ENCODE measurements at regions of chr9 and their contacts with region 1.

Region 1: GRCh38 chr9:34403554-34404380 is 27.1 kb upstream of the MYORG start:
- DNase-seq: peak; percentile 75
- H3K4me3 ChIP-seq: no peak overlapping the region
- H3K27ac ChIP-seq: no peak overlapping the region
- H3K4me1 ChIP-seq: no peaks in the 10 kb centered on the region
- H3K27me3 ChIP-seq: no peaks in the 10 kb centered on the region
- CTCF ChIP-seq: peak; percentile 95

Region 2: DNA sequence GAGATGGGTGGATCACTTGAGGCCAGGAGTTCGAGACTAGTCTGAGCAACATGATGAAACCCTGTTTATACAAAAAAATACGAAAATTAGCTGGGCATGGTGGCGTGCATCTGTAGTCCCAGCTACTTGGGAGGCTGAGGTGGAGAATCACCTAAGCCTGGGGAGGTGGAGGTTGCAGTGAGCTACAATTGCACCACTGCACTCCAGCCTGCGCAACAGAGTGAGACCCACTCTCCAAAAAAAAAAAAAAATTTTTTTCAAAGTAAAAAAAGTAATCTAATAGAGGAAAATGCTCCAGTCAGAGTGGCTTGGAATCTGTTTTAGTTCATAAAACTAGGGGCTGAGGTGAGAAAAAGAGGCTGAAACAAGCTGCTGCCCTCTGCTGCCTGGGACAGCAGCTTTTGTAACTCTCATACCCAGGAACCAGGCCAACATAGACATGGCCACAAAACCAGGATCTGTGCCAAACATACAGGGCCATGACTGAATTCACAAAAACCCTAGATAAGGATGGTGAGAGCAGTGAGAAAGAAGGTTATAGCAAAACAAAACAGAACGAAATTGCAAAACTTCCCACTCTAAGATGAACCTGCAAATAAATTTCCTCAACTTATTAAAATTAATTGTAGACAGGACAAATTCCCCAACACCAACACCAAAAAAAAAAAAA is 264.2 kb before region 1 on chr9:
- CTCF ChIA-PET with region 1: interaction called, 17 read pairs
- POLR2A ChIA-PET with region 1: no interaction called
- intact Hi-C with region 1: no loop called
- DNase-seq: peak; percentile 45
- H3K4me3 ChIP-seq: no peak overlapping the region
- H3K27ac ChIP-seq: no peak overlapping the region
- H3K4me1 ChIP-seq: no peaks in the 10 kb centered on the region
- H3K27me3 ChIP-seq: no peaks in the 10 kb centered on the region
- CTCF ChIP-seq: peak; percentile 34; the same call in 1 of the 2 replicates

Region 3: GRCh38 chr9:34387239-34387638 is 16.5 kb before region 1 on chr9:
- CTCF ChIA-PET with region 1: no interaction called
- POLR2A ChIA-PET with region 1: no interaction called
- intact Hi-C with region 1: no loop called
- DNase-seq: no peak
- H3K4me3 ChIP-seq: no peak overlapping the region
- H3K27ac ChIP-seq: no peak overlapping the region
- H3K4me1 ChIP-seq: no peaks in the 10 kb centered on the region
- H3K27me3 ChIP-seq: no peaks in the 10 kb centered on the region
- CTCF ChIP-seq: no peak

Region 4: GRCh38 chr9:34603610-34604231 is 200.0 kb after region 1 on chr9:
- CTCF ChIA-PET with region 1: interaction called, 17 read pairs
- POLR2A ChIA-PET with region 1: no interaction called
- intact Hi-C with region 1: no loop called
- DNase-seq: peak; percentile 88
- H3K4me3 ChIP-seq: no peak overlapping the region
- H3K27ac ChIP-seq: no peak overlapping the region
- H3K4me1 ChIP-seq: no peaks in the 10 kb centered on the region
- H3K27me3 ChIP-seq: no peaks in the 10 kb centered on the region
- CTCF ChIP-seq: peak; percentile 96

Region 5: DNA sequence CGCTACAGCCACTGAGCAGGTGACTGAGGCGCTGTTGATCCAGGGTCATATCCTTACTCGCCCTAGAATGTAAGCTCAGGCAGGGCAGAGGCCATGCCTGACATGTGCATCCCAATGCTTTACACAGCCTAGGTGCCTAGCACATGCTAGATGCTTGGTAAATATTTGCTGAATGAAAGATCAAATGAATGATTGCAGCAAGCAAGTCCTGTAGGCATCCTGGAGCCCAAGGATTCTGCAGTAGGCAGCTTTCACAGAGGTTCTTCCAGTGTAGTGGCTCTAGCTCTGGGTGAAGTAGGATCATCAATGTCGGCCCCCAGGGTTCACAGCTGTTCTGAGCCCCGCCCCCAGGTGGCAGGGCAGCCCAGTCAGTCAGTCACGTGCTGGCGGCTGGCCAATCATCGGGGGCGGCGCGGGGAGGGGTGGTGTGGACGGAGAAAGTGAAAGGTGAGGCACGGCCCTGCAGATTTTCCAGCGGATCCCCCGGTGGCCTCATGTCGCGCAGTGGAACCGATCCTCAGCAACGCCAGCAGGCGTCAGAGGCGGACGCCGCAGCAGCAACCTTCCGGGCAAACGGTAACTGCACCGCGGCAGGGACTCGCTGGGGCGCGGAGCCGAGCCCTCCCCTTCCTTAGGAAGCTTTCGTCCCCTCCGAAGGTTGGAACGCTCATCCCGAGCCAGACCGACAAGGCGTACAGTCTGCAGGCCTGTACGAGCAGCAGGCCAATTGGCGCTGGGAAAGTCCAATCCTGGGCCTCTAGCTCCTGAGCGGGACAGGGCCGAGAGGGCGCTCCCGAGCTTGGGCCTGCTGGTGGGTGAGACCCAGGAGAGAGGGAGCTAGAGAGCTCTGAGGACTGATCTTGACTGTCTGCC is 242.7 kb after region 1 on chr9 and contains the start of gene GALT:
- CTCF ChIA-PET with region 1: no interaction called
- POLR2A ChIA-PET with region 1: no interaction called
- intact Hi-C with region 1: no loop called
- DNase-seq: peak; percentile 91
- H3K4me3 ChIP-seq: peak within 1 kb of the TSS; percentile 89
- H3K27ac ChIP-seq: peak within 1 kb of the TSS; percentile 77
- H3K4me1 ChIP-seq: peaks cover 8% of the 10 kb centered on the region
- H3K27me3 ChIP-seq: no peaks in the 10 kb centered on the region
- CTCF ChIP-seq: peak; percentile 45
- total RNA-seq, gene GALT: 27.6 and 37.6 TPM in 2 replicates